Naive thymus-derived CD4-positive, alpha-beta T cell (primary cell): ENCODE measurements at regions of chr15 and their contacts with region 1.

Region 1: GRCh38 chr15:38699633-38700230 is 135.1 kb upstream of the RASGRP1 start:
- DNase-seq: peak in 8 of 9 donors; percentile 43 to 77 (median 71)
- ATAC-seq: peak; percentile 84
- H3K4me3 ChIP-seq: no peak overlapping the region
- H3K4me3 Mint-ChIP-seq: peak overlapping the region in 4 of 10 donors; percentile 8 to 73 (median 48)
- H3K27ac ChIP-seq: no peak overlapping the region
- H3K27ac Mint-ChIP-seq: peak overlapping the region; percentile 34 to 92 (median 77)
- H3K4me1 ChIP-seq: peaks cover 36 to 48% of the 10 kb centered on the region in 2 donors
- H3K4me1 Mint-ChIP-seq: peaks cover 23 to 71% (median 44%) of the 10 kb centered on the region in 7 donors
- H3K27me3 ChIP-seq: no peaks in the 10 kb centered on the region
- H3K27me3 Mint-ChIP-seq: no peaks in the 10 kb centered on the region

Region 2: DNA sequence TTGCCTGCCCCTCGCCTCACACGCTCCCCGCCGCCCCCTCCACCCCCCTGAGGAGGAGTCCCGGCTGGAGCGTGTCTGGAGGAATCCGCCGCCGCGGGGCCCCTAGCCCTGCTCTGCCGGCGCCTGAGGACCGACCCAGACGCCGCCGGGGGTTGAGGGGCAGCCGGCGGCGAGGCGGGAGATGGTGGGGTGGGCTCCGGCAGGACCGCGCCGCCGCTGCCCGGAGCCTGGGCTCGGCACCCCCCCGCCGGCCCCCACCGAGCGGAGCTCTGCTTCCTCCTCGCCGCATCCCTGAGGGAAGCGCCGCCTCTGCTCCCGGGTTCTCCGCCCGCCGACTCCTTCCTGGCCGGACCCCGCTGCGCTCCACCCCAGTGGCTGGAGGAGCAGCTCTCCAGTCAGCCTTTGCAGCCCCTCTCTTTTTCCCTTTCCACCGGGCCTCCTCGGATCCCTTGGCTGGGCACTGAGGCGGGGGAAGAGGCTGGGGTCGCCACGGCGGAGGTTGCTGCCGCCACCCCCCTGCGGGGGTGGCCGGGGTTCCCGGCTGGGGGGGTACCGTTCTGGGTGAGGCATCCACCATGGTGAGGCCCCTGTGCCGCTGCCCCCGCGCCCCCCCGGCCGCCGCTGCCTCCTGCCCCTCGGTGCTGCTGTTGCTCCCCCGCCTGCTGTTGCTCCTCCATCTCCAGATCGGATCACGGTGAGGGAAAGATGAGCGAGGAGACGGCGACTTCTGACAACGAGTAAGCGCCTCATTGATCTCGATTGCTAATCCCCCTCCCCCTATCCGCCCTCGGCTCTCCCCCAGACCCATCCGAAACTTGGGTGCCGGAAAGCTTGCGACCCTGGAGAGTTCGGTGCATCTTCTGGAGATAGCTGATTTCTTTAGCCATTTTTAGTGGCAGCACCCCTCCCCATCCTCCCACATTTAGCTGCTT is 447.0 kb before region 1 on chr15 and contains the start of gene SPRED1:
- CTCF ChIA-PET with region 1: no interaction called
- POLR2A ChIA-PET with region 1: interaction called, 3 read pairs
- intact Hi-C with region 1: loop called in 1 of 2 experiments (anchors 10 kb)
- DNase-seq: peak in 8 of 9 donors; percentile 8 to 28 (median 9)
- ATAC-seq: peak; percentile 12
- H3K4me3 ChIP-seq: peak within 1 kb of the TSS; percentile 78
- H3K4me3 Mint-ChIP-seq: peak within 1 kb of the TSS; percentile 80 to 97 (median 90)
- H3K27ac ChIP-seq: no peak within 1 kb of the TSS
- H3K27ac Mint-ChIP-seq: peak within 1 kb of the TSS in 8 of 9 donors; percentile 26 to 88 (median 64)
- H3K4me1 ChIP-seq: peaks cover 17 to 19% of the 10 kb centered on the region in 2 donors
- H3K4me1 Mint-ChIP-seq: peaks cover 25 to 36% (median 27%) of the 10 kb centered on the region in 7 donors
- H3K27me3 ChIP-seq: no peaks in the 10 kb centered on the region
- H3K27me3 Mint-ChIP-seq: peaks cover 18 to 73% (median 43%) of the 10 kb centered on the region in 5 donors
- total RNA-seq, gene SPRED1: 0.07 to 2.6 (median 0.95) TPM

Region 3: GRCh38 chr15:38474155-38474757 is 225.5 kb before region 1 on chr15:
- CTCF ChIA-PET with region 1: interaction called, 42 read pairs
- POLR2A ChIA-PET with region 1: interaction called, 5 read pairs
- intact Hi-C with region 1: loop called (anchors 1 kb)
- DNase-seq: peak in 7 of 9 donors; percentile 53 to 75 (median 62)
- ATAC-seq: peak; percentile 100
- H3K4me3 ChIP-seq: no peak overlapping the region
- H3K4me3 Mint-ChIP-seq: peak overlapping the region in 2 of 10 donors; percentile 4 to 10
- H3K27ac ChIP-seq: no peak overlapping the region
- H3K27ac Mint-ChIP-seq: peak overlapping the region; percentile 10 to 88 (median 81)
- H3K4me1 ChIP-seq: peaks cover 0 to 5% of the 10 kb centered on the region in 2 donors
- H3K4me1 Mint-ChIP-seq: peaks cover 10 to 23% (median 13%) of the 10 kb centered on the region in 7 donors
- H3K27me3 ChIP-seq: no peaks in the 10 kb centered on the region
- H3K27me3 Mint-ChIP-seq: no peaks in the 10 kb centered on the region

Region 4: GRCh38 chr15:38490242-38490922 is 209.3 kb before region 1 on chr15:
- CTCF ChIA-PET with region 1: interaction called, 11 read pairs
- POLR2A ChIA-PET with region 1: interaction called, 4 read pairs
- intact Hi-C with region 1: no loop called
- DNase-seq: no peak
- ATAC-seq: no peak
- H3K4me3 ChIP-seq: no peak overlapping the region
- H3K4me3 Mint-ChIP-seq: no peak overlapping the region
- H3K27ac ChIP-seq: peak overlapping the region; percentile 14
- H3K27ac Mint-ChIP-seq: peak overlapping the region in 8 of 9 donors; percentile 18 to 93 (median 67)
- H3K4me1 ChIP-seq: peaks cover 0 to 13% of the 10 kb centered on the region in 2 donors
- H3K4me1 Mint-ChIP-seq: peaks cover 7 to 48% (median 42%) of the 10 kb centered on the region in 7 donors
- H3K27me3 ChIP-seq: no peaks in the 10 kb centered on the region
- H3K27me3 Mint-ChIP-seq: no peaks in the 10 kb centered on the region

Region 5: DNA sequence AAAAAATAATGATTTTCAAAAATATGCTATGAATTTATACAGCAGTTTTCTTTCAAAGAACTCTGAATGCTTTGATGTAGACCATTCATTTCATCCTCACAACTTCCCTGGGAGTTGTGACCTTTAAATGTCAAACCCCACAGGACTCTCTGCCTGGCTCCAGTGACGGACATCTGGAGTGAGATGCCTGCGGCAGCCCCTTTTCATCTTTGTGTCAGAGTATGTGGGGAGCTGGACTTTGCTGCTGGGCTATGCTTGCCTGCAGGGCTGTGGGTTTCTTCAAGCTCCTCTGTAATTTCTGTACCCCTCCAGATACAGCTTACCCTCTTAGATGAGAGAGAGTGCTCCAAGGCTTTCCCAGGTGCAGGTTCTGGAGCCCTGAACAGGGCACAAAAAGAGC is 64.6 kb before region 1 on chr15:
- CTCF ChIA-PET with region 1: no interaction called
- POLR2A ChIA-PET with region 1: no interaction called
- intact Hi-C with region 1: no loop called
- DNase-seq: no peak
- ATAC-seq: no peak
- H3K4me3 ChIP-seq: no peak overlapping the region
- H3K4me3 Mint-ChIP-seq: no peak overlapping the region
- H3K27ac ChIP-seq: no peak overlapping the region
- H3K27ac Mint-ChIP-seq: no peak overlapping the region
- H3K4me1 ChIP-seq: peaks cover 0 to 36% of the 10 kb centered on the region in 2 donors
- H3K4me1 Mint-ChIP-seq: peaks cover 16 to 55% (median 47%) of the 10 kb centered on the region in 7 donors
- H3K27me3 ChIP-seq: no peaks in the 10 kb centered on the region
- H3K27me3 Mint-ChIP-seq: no peaks in the 10 kb centered on the region

Region 6: GRCh38 chr15:38745126-38745525 is 45.4 kb after region 1 on chr15:
- CTCF ChIA-PET with region 1: no interaction called
- POLR2A ChIA-PET with region 1: no interaction called
- intact Hi-C with region 1: no loop called
- DNase-seq: no peak
- ATAC-seq: no peak
- H3K4me3 ChIP-seq: no peak overlapping the region
- H3K4me3 Mint-ChIP-seq: no peak overlapping the region
- H3K27ac ChIP-seq: no peak overlapping the region
- H3K27ac Mint-ChIP-seq: no peak overlapping the region
- H3K4me1 ChIP-seq: no peaks in the 10 kb centered on the region
- H3K4me1 Mint-ChIP-seq: no peaks in the 10 kb centered on the region
- H3K27me3 ChIP-seq: no peaks in the 10 kb centered on the region
- H3K27me3 Mint-ChIP-seq: peaks cover 0 to 25% (median 10%) of the 10 kb centered on the region in 5 donors

Region 7: GRCh38 chr15:38853608-38854007 is 153.9 kb after region 1 on chr15:
- CTCF ChIA-PET with region 1: no interaction called
- POLR2A ChIA-PET with region 1: no interaction called
- intact Hi-C with region 1: loop called in 1 of 2 experiments (anchors 10 kb)
- DNase-seq: peak in 5 of 9 donors; percentile 18 to 37 (median 28)
- ATAC-seq: peak; percentile 42
- H3K4me3 ChIP-seq: no peak overlapping the region
- H3K4me3 Mint-ChIP-seq: no peak overlapping the region
- H3K27ac ChIP-seq: no peak overlapping the region
- H3K27ac Mint-ChIP-seq: no peak overlapping the region
- H3K4me1 ChIP-seq: no peaks in the 10 kb centered on the region
- H3K4me1 Mint-ChIP-seq: no peaks in the 10 kb centered on the region
- H3K27me3 ChIP-seq: no peaks in the 10 kb centered on the region
- H3K27me3 Mint-ChIP-seq: peaks cover 30 to 52% (median 40%) of the 10 kb centered on the region in 5 donors